Left ventricle myocardium superior (tissue), 1 donor: ENCODE measurements at regions of chr1 and their contacts with region 1.

Region 1: DNA sequence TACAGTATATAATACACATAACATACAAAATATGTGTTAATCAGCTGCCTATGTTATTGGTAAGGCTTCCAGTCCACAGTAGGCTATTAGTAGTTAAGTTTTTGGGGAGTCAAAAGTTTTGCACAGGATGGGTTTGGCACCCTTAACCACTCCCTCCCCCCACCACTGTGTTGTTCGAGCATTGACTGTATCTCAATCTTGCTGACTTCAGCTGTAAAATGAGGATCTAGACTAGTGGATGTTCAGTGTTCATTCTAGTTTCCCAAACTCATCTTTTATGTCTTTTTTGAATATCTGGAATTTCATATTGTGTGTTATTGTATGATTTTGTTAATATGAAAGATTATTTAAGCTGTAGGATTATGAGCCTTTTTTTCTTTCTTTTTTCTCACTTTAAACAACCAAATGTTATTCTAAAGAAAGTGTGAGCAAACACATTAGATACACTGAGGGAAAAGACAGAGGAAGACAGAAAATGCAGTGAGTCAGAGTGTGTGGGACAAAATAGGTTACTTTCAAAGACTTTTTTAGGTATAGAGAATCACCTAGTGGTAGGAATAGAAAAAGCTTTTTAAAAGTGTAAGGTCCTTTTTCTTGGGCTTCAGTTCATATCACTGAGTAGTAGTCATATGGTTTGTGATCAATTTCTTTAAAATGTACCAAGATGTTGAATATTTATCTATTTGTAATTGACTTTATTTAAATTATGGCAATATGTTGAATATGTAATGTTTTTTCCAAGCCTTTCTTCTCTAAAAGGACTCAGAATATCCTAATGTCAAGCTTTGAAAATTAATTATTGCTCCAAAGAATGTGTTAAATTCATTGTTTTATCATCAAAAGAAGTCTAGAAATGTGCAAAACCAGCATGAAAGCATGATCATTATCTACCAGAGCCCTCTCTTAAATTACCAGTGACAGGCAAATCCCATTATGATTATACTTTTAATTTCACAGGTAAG is 17.9 kb upstream of the CENPF start:
- DNase-seq: no peak
- ATAC-seq: peak; percentile 79

Region 2: DNA sequence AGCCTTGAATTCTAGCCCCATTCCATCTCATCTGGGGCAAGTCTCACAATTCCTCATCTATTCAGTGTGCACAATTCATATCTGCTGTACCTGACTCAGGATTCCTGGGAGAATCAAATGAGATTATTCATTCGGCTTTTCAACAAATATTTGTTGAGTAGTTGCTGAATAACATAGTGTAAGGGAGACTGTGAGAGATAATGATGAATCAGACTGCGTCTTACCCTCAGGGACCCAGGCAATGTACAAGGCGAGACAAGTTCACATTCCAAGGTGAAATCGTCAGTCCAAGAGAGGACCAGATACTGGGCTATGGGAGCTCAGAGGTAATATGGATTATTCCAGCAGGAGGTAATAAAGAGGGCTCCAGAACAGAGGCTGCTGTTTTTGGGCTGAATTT is 371.9 kb before region 1 on chr1:
- intact Hi-C with region 1: loop called (anchors 10 kb)
- DNase-seq: no peak
- ATAC-seq: no peak